ENCODE measurements at regions of chr2 and their contacts with region 1.

Region 1: DNA sequence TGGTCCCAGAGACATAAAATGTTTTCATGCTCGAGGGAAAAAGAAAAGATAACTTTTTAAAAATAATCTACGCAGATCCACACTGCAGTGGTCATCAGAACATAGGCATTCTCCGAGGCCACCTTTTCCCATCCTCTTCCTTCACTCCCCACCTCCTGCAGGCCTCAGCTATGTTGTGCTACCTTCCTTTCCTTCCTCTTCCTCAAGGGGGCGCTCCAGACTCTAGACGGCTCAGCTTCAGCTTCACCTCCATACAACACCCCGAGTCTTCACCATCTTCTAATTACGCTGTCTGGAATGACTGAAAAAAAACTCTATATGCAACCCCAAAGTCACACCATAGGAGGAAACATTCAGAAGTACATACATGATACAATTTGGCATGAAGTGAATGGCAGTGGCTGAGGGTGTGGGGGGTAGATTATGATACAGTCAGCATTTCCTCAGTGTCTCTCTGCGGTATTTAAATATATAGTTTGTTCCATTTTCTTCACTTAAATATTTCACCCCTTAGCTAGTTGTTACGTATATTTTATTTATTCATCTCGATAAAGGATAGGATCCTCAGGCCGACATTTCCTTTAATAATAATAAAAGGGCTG is 583.6 kb downstream of the IRS1 start:
- DNase-seq: peak; percentile 18
- ATAC-seq: no peak; the same call in 1 of the 2 replicates
- H3K4me3 ChIP-seq: no peak overlapping the region
- H3K27ac ChIP-seq: no peak overlapping the region
- H3K4me1 ChIP-seq: no peaks in the 10 kb centered on the region
- H3K27me3 ChIP-seq: no peaks in the 10 kb centered on the region
- CTCF ChIP-seq: peak; percentile 86

Region 2: GRCh38 chr2:226337941-226338600 is 122.1 kb after region 1 on chr2:
- CTCF ChIA-PET with region 1: no interaction called
- POLR2A ChIA-PET with region 1: no interaction called
- in situ Hi-C with region 1: no loop called
- intact Hi-C with region 1: no loop called
- DNase-seq: no peak
- ATAC-seq: no peak
- H3K4me3 ChIP-seq: no peak overlapping the region
- H3K27ac ChIP-seq: no peak overlapping the region
- H3K4me1 ChIP-seq: no peaks in the 10 kb centered on the region
- H3K27me3 ChIP-seq: no peaks in the 10 kb centered on the region
- CTCF ChIP-seq: no peak

Region 3: GRCh38 chr2:226754821-226755604 is 539.0 kb after region 1 on chr2:
- CTCF ChIA-PET with region 1: no interaction called
- POLR2A ChIA-PET with region 1: interaction called, 11 read pairs
- in situ Hi-C with region 1: no loop called
- intact Hi-C with region 1: no loop called
- DNase-seq: no peak
- ATAC-seq: peak; percentile 72; the same call in 1 of the 2 replicates
- H3K4me3 ChIP-seq: no peak overlapping the region
- H3K27ac ChIP-seq: peak overlapping the region; percentile 23; the same call in 1 of the 2 replicates
- H3K4me1 ChIP-seq: peaks cover 35% of the 10 kb centered on the region
- H3K27me3 ChIP-seq: no peaks in the 10 kb centered on the region
- CTCF ChIP-seq: no peak